GM12878 (cell line): ENCODE measurements at regions of chr4 and their contacts with region 1.

Region 1: GRCh38 chr4:10239982-10240654 is 123.5 kb upstream of the WDR1 start:
- DNase-seq: no peak
- ATAC-seq: no peak
- H3K4me3 ChIP-seq: no peak overlapping the region
- H3K27ac ChIP-seq: no peak overlapping the region
- H3K4me1 ChIP-seq: no peaks in the 10 kb centered on the region
- H3K27me3 ChIP-seq: no peaks in the 10 kb centered on the region; a peak in 1 of 4 replicates
- CTCF ChIP-seq: no peak
- EP300 ChIP-seq: no peak
- POLR2A ChIP-seq: no peak
- RAD21 ChIP-seq: no peak

Region 2: DNA sequence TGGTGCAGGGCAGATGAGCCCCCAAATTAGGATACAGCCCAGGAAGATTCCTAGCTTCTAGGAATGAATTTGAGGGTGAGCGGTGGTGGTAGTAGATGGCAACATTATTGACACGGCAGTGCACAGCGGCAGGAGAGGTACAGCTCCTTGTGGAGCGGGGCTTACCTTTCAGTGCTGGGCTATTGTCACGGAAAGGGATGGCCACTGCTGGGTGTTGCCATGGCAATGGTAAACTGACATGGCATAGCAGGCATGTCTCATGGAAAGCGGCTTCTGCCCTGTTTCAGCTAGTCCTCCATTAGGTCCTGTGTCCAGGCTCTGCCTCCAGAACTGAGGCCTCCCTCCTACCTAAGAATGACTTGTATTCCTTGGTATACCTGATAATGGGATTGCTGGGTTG is 41.8 kb before region 1 on chr4:
- CTCF ChIA-PET with region 1: no interaction called
- POLR2A ChIA-PET with region 1: no interaction called
- RAD21 ChIA-PET with region 1: no interaction called
- SMC1A ChIA-PET with region 1: no interaction called
- in situ Hi-C with region 1: no loop called
- intact Hi-C with region 1: loop called (anchors 5 kb)
- DNase-seq: no peak
- ATAC-seq: no peak
- H3K4me3 ChIP-seq: no peak overlapping the region
- H3K27ac ChIP-seq: no peak overlapping the region
- H3K4me1 ChIP-seq: no peaks in the 10 kb centered on the region
- H3K27me3 ChIP-seq: no peaks in the 10 kb centered on the region
- CTCF ChIP-seq: no peak
- EP300 ChIP-seq: no peak
- POLR2A ChIP-seq: no peak
- RAD21 ChIP-seq: no peak

Region 3: DNA sequence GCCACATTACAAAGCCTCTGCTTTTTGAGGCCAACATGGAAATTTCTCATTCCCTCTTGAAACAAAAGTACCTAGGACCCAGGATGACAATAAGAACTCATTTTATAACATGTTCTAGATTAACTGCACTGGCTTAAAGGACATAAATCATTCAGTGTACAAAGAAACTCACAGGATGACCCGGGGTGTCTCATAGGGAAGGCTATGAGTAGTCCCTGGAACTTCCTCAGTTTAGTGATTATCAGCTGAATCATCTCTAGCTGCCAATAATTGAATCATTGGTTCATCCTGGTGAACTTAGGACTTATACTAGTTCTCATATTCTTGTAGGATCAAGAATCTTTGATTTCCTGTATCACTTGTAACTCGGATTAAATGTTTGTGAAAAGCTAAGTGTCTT is 27.7 kb before region 1 on chr4:
- CTCF ChIA-PET with region 1: no interaction called
- POLR2A ChIA-PET with region 1: no interaction called
- RAD21 ChIA-PET with region 1: no interaction called
- SMC1A ChIA-PET with region 1: no interaction called
- in situ Hi-C with region 1: no loop called
- intact Hi-C with region 1: no loop called
- DNase-seq: no peak
- ATAC-seq: no peak
- H3K4me3 ChIP-seq: no peak overlapping the region
- H3K27ac ChIP-seq: no peak overlapping the region
- H3K4me1 ChIP-seq: no peaks in the 10 kb centered on the region
- H3K27me3 ChIP-seq: no peaks in the 10 kb centered on the region
- CTCF ChIP-seq: no peak
- EP300 ChIP-seq: no peak
- POLR2A ChIP-seq: no peak
- RAD21 ChIP-seq: no peak